ENCODE measurements at regions of chr6 and their contacts with region 1.

Region 1: DNA sequence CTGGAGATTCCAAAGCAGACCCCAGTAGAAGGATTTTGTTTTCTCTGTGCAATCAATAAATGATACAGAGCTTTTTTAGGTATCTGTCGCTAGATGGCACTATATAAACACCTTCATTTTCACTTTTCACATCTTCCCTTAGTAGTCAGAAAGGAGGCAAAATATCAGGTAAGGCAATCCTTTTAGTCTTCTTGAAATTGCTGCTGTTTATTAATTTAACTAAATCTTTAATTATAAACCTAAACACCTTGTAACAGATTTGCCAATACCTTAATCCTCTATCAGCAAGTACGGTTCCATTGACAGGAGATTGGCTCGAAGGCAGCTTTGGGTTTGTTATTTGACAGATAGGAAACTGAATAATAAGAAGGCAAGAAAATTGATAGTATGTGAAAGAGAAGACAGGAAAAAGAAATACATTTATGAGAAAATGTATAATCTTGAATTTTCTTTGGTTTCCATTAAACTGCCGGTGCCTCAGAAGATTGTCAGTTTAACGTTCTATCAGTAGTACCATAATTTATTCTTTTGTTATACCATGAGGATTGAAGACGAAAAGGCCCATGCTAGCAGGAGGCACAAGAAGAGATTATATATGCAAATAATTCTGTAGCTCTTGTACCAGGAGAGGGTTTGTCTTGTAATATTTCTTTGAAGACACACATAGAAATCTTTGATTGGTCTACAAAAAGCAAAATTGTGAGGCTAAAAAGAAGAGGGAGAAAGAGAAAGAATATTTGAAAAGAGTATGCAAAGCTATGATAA is 23.5 kb upstream of the IBTK start:
- DNase-seq: no peak
- ATAC-seq: no peak

Region 2: GRCh38 chr6:82017288-82017687 is 253.8 kb before region 1 on chr6:
- intact Hi-C with region 1: no loop called
- DNase-seq: no peak
- ATAC-seq: peak; percentile 90

Region 3: GRCh38 chr6:82166493-82166892 is 104.6 kb before region 1 on chr6:
- intact Hi-C with region 1: no loop called
- DNase-seq: no peak
- ATAC-seq: peak; percentile 90

Region 4: GRCh38 chr6:83057705-83058321 is 786.8 kb after region 1 on chr6:
- intact Hi-C with region 1: loop called (anchors 2 kb)
- DNase-seq: no peak
- ATAC-seq: no peak

Measured in Right ventricle myocardium inferior (tissue), 1 donor.